Ascending aorta (tissue), 2 donors: ENCODE measurements at regions of chr21 and their contacts with region 1.

Region 1: GRCh38 chr21:28822486-28823335 is 170.0 kb downstream of the LTN1 start:
- DNase-seq: no peak
- H3K4me3 ChIP-seq: no peak overlapping the region
- H3K27ac ChIP-seq: peak overlapping the region; percentile 62 to 78
- H3K4me1 ChIP-seq: peaks cover 6 to 40% of the 10 kb centered on the region in 2 donors
- H3K27me3 ChIP-seq: no peaks in the 10 kb centered on the region
- CTCF ChIP-seq: no peak

Region 2: DNA sequence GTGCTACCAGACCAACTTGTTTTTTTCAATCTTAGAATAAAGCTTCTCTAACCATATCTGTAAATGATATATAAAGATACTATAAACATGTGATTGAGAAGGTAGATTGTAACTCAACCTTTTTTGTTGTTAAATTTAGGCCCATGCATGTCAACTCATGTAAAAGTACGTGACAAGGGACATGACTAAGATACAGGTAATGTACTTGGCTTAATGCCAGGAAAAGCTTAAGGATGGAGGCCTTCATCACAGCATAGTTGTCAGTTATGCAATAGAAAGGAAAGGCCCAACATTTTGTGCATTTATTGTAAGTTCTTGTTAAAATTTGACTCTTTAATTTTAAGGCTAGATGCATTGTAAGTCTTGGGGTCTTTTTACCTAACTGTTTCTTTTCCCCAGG is 135.1 kb before region 1 on chr21:
- intact Hi-C with region 1: no loop called
- DNase-seq: no peak
- H3K4me3 ChIP-seq: no peak overlapping the region
- H3K27ac ChIP-seq: no peak overlapping the region
- H3K4me1 ChIP-seq: no peaks in the 10 kb centered on the region
- H3K27me3 ChIP-seq: no peaks in the 10 kb centered on the region
- CTCF ChIP-seq: no peak

Region 3: DNA sequence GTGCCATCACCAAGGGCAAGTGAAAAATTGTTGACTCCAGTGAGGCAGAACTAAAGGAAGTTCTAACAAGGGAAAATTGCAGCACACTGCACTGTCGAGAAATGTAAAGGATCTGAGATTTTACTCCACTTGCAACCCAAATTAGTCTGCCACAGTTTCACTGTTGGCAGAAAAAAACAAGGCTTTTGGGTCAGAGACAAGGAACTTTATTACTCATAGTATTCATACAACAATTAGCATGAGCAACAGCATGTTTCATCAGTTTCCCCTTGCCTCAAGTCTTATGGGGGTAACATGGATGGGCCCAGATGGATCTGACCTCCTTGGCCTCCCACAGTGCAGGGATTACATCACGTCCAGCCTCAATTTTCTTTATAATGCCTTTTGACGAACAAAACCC is 44.7 kb after region 1 on chr21:
- intact Hi-C with region 1: loop called (anchors 5 kb)
- DNase-seq: no peak
- H3K4me3 ChIP-seq: no peak overlapping the region
- H3K27ac ChIP-seq: no peak overlapping the region
- H3K4me1 ChIP-seq: no peaks in the 10 kb centered on the region
- H3K27me3 ChIP-seq: no peaks in the 10 kb centered on the region
- CTCF ChIP-seq: no peak

Region 4: DNA sequence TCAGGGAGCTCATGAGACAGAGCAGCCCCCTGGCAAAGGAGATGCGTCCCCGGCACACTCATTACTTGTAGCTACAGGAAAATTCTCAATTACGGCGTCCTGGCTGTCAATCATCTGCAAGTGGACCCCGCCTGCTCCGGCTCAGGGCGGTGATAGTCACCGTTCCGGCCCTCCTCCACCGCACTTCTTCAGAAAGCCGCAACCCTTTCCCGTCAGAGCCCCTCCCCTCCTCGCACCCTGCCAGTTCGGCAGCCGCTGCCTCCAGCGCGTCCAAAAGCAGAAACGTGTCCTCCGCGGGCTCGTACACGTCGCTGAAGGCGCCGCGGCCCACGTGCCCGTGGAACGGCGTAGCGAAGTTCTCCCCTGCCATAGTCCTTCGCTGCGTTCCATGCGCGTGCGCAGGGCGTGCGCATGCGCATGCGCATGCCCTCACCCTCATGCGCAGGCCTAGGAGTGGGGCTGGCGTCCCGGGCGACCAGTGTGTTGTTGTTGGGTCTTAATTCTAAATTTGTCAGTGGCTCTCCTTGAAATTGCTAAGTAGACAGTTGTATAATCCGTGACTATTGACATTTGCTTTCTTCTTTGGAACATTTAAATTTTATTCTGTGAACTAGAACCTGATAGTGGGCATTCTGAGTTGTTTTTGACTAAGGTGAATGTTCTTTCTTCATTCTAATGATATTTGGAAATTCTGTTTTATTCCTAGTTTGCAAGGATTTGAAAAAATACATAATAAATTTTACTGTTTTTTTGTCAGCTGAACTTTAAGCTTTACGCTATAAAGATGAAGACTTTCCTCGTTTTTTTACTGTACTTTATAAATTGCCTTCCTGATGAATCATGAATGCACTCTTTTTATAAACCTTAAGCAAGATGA is 62.5 kb after region 1 on chr21:
- intact Hi-C with region 1: loop called (anchors 2 kb)
- DNase-seq: peak; percentile 69 to 95
- H3K4me3 ChIP-seq: peak overlapping the region; percentile 55 to 62
- H3K27ac ChIP-seq: peak overlapping the region; percentile 84 to 85
- H3K4me1 ChIP-seq: peaks cover 0 to 11% of the 10 kb centered on the region in 2 donors
- H3K27me3 ChIP-seq: no peaks in the 10 kb centered on the region
- CTCF ChIP-seq: no peak